Esophagus squamous epithelium (tissue), 5 donors: ENCODE measurements at regions of chr12 and their contacts with region 1.

Region 1: GRCh38 chr12:121678716-121679580 is 9.5 kb upstream of the MORN3 start:
- DNase-seq: no peak
- H3K4me3 ChIP-seq: no peak overlapping the region
- H3K27ac ChIP-seq: no peak overlapping the region
- H3K4me1 ChIP-seq: peaks cover 0 to 12% (median 3%) of the 10 kb centered on the region in 3 donors
- H3K27me3 ChIP-seq: no peaks in the 10 kb centered on the region
- CTCF ChIP-seq: no peak
- POLR2A ChIP-seq: no peak

Region 2: DNA sequence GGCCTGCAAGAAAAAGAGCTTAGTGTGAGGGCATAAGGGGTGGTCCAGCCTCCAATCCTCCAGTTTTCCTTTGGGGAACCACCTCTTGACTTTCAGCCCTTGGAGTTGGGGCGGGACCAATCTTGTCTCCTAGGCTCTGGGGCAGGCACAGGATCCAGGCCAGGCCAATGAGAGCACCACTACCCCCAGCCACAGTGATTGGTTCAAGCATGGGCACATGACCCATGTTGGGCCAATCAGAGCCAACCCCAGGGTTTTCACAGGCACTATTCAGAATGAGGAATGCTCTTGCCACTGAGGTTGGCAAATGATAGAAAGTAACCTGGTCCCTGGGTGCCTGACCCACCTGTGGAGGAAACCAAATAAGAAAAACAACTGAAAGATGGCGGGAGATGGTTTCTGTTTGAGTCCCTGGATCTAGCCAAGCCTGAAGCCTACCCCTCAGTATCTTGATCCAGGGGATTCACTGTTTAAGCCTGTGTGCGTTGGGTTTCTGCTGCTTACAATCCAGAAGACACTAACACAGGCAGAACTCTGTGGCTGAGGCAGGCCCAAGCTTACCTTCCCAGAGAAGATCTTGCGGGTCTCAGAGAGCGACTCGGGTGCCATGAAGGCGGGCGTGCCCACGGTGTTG is 426.1 kb before region 1 on chr12:
- intact Hi-C with region 1: no loop called
- DNase-seq: no peak
- H3K4me3 ChIP-seq: no peak overlapping the region
- H3K27ac ChIP-seq: no peak overlapping the region
- H3K4me1 ChIP-seq: peaks cover 0 to 10% (median 0%) of the 10 kb centered on the region in 3 donors
- H3K27me3 ChIP-seq: no peaks in the 10 kb centered on the region
- CTCF ChIP-seq: no peak
- POLR2A ChIP-seq: no peak

Region 3: GRCh38 chr12:121550974-121551634 is 127.8 kb before region 1 on chr12:
- intact Hi-C with region 1: loop called (anchors 5 kb)
- DNase-seq: no peak
- H3K4me3 ChIP-seq: no peak overlapping the region
- H3K27ac ChIP-seq: no peak overlapping the region
- H3K4me1 ChIP-seq: peaks cover 0 to 6% (median 0%) of the 10 kb centered on the region in 3 donors
- H3K27me3 ChIP-seq: no peaks in the 10 kb centered on the region
- CTCF ChIP-seq: no peak
- POLR2A ChIP-seq: no peak